Heart left ventricle (tissue), 16 donors: ENCODE measurements at regions of chr10 and their contacts with region 1.

Region 1: DNA sequence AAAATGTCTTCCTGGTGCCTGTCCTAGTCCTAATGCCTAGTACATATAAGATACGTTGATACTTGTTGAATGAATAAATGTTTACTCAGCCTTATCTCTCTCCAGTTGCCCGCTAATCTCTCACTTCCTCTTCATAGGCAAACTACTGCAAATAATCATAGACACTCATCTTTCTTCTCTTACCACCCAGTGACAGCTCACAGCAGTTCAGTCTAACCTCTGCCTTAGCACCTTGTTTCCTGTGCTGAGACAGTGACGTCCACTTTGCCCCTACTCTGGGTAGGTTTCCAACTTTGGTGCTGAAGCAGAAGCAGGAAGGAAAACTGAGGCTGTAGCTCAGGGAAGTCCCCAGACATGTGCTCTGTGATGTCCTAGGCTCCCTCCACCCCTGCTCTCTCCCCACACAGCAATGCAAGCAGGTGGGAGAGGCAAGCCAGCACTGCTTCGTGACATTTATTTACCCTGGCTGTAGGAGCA is 45.5 kb upstream of the RHOBTB1 start:
- DNase-seq: no peak
- ATAC-seq: no peak
- H3K4me3 ChIP-seq: no peak overlapping the region
- H3K27ac ChIP-seq: no peak overlapping the region
- H3K4me1 ChIP-seq: no peaks in the 10 kb centered on the region
- H3K27me3 ChIP-seq: no peaks in the 10 kb centered on the region
- CTCF ChIP-seq: no peak
- POLR2A ChIP-seq: no peak

Region 2: DNA sequence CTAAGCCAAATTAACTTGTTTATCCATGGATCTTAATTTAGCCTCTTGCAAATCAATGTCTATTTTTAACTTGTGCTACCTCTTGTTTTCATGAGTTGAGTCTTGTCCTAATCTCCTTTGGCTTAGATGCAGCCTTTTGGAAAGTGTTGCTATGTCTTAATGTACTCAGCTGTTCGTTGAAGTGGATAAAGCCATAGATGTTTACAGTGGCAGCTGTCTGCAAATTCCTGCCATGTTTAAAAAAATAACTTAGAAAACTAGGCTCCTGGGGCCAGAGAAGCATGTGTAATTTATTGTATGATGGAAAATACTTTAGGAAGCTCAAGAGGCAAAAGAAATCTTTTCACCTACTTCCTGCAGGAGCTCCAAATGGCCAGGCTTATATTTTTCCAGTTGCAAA is 207.6 kb after region 1 on chr10:
- intact Hi-C with region 1: loop called in 1 of 10 experiments (anchors 10 kb)
- DNase-seq: peak in 1 of 5 donors; percentile 20
- ATAC-seq: peak; percentile 34 to 70 (median 60)
- H3K4me3 ChIP-seq: no peak overlapping the region
- H3K27ac ChIP-seq: peak overlapping the region in 3 of 12 donors; percentile 1 to 53 (median 35)
- H3K4me1 ChIP-seq: peaks cover 0 to 13% (median 0%) of the 10 kb centered on the region in 12 donors
- H3K27me3 ChIP-seq: no peaks in the 10 kb centered on the region
- CTCF ChIP-seq: no peak
- POLR2A ChIP-seq: no peak